Endothelial cell of umbilical vein (primary cell): ENCODE measurements at regions of chr19 and their contacts with region 1.

Region 1: GRCh38 chr19:43532962-43533545 is at the start of gene ZNF575:
- DNase-seq: peak; percentile 96
- H3K4me3 ChIP-seq: peak within 1 kb of the TSS; percentile 22 to 61 (median 31)
- H3K27ac ChIP-seq: peak within 1 kb of the TSS; percentile 32
- H3K4me1 ChIP-seq: peaks cover 10% of the 10 kb centered on the region
- H3K27me3 ChIP-seq: no peaks in the 10 kb centered on the region
- CTCF ChIP-seq: no peak
- POLR2A ChIP-seq: no peak
- total RNA-seq, gene ZNF575: 1.4 and 3.0 TPM in 2 replicates

Region 2: GRCh38 chr19:43555185-43555770 is 22.2 kb after region 1 on chr19:
- CTCF ChIA-PET with region 1: interaction called, 69 read pairs
- POLR2A ChIA-PET with region 1: no interaction called
- dilution Hi-C with region 1: no loop called
- intact Hi-C with region 1: loop called (anchors 2 kb)
- DNase-seq: peak; percentile 70
- H3K4me3 ChIP-seq: no peak overlapping the region
- H3K27ac ChIP-seq: no peak overlapping the region
- H3K4me1 ChIP-seq: no peaks in the 10 kb centered on the region
- H3K27me3 ChIP-seq: no peaks in the 10 kb centered on the region
- CTCF ChIP-seq: peak; percentile 84 to 94
- POLR2A ChIP-seq: no peak

Region 3: DNA sequence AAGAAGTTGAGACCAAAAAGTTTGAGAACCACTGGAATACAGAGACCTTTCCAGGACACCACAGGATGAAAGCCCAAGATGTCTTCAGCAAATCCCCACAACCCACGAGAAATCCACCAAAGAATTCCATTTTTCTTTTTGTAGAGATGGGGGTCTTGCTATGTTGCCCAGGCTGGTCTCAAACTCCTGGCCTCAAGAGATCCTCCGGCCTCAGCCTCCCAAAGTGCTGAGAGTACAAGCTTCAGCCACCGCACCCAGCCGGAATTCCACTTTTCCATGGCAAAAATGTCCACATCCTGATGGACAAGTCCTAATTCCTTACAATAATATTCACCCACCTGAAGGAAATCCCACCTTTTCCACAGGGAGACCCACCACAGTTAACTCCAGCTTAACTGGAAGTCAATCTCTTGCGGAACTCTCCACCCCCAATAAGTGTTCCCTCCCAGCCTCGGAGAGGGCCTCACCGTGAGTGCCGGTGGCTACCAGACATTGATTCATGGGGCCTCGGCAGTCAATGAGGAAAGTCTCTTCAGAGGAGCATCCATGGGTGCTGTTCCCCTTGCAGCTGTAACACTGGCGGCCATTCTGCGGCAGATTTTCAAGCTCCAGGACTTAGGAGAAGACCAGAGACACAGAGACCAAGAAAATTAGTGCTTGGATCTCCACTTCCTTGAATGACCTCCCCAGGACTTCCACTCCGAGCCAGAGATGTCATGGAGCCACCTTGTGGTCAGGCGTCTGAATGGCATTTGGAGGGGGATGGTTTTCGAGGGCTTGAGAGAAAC is 118.9 kb after region 1 on chr19:
- CTCF ChIA-PET with region 1: interaction called, 15 read pairs
- POLR2A ChIA-PET with region 1: no interaction called
- dilution Hi-C with region 1: no loop called
- intact Hi-C with region 1: loop called (anchors 1 kb)
- DNase-seq: peak; percentile 77
- H3K4me3 ChIP-seq: peak overlapping the region in 1 of 3 experiments; percentile 7
- H3K27ac ChIP-seq: no peak overlapping the region
- H3K4me1 ChIP-seq: no peaks in the 10 kb centered on the region
- H3K27me3 ChIP-seq: no peaks in the 10 kb centered on the region
- CTCF ChIP-seq: peak; percentile 82 to 86
- POLR2A ChIP-seq: no peak

Region 4: DNA sequence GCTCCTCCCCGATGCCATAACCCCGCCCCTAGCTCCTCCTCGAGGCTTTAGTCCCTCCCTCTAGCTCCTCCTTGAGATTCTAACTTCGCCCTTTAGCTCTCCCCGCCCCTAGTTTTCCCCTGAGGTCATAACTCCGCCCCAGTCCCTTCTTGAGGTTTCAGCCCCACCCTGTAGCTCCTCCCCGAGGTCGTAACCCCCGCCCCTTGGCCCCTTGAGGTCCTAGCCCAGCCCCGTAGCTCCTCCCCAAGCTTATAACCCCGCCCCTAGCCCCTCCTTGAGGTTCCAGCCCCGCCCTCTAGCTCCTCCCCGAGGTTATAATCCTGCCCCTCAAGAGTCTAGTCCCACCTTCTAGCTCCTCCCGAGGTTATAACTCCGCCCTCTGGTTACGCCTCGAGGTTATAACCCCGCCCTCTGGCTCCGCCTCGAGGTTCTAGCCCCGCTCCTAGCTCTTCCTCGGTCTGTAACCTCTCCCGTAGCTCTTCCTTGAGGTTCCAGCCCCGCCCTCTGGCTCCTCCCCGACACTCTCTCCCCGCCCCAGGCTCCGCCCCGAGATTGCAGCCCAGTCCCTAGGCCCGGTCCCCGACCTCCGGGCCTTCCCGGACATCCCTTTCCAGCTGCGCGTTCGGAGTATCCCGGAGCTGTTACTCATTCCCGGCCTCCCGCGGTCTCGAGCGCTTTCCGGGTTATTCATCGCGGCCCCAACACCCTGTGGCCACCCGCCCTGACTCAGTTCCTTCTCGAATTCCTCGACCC is 135.5 kb after region 1 on chr19:
- CTCF ChIA-PET with region 1: interaction called, 5 read pairs
- POLR2A ChIA-PET with region 1: no interaction called
- dilution Hi-C with region 1: no loop called
- intact Hi-C with region 1: loop called (anchors 1 kb)
- DNase-seq: peak; percentile 99
- H3K4me3 ChIP-seq: peak overlapping the region; percentile 54 to 73 (median 73)
- H3K27ac ChIP-seq: peak overlapping the region; percentile 98
- H3K4me1 ChIP-seq: peaks cover 35% of the 10 kb centered on the region
- H3K27me3 ChIP-seq: no peaks in the 10 kb centered on the region
- CTCF ChIP-seq: no peak
- POLR2A ChIP-seq: no peak

Region 5: GRCh38 chr19:43784981-43785808 is 252.1 kb after region 1 on chr19:
- CTCF ChIA-PET with region 1: interaction called, 3 read pairs
- POLR2A ChIA-PET with region 1: no interaction called
- dilution Hi-C with region 1: no loop called
- intact Hi-C with region 1: loop called (anchors 1 kb)
- DNase-seq: peak; percentile 73
- H3K4me3 ChIP-seq: no peak overlapping the region
- H3K27ac ChIP-seq: no peak overlapping the region
- H3K4me1 ChIP-seq: peaks cover 10% of the 10 kb centered on the region
- H3K27me3 ChIP-seq: no peaks in the 10 kb centered on the region
- CTCF ChIP-seq: peak; percentile 97 to 98
- POLR2A ChIP-seq: no peak